ENCODE measurements at regions of chr2 and their contacts with region 1.

Region 1: DNA sequence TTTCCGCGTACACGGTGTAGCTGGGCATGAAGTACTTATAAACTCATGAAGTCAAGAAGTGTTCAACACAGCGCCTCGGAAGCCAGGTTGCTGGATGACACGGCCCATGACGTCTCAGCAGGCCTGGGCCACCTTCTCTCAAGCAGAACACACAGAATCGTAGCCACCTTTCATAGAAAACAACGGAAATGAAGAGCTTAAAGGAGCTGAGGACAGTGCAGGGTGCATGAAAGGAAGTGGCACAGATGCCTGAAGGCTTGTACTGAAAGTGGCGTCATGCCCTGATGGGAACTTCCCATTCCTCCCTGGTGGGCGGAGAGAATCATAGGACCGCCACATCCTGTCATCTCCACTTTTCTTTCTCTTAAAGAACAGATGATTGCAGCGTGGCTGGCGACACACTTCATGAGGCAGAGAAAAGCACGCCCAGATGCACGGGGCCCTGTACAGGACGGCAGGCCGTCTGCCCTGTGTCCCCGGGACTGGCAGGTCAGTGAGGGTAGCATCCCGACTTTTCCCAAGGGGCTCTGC is 31.1 kb downstream of the HDAC4 start:
- DNase-seq: peak; percentile 57 to 95 (median 72)
- ATAC-seq: peak; percentile 94
- H3K4me3 ChIP-seq: peak overlapping the region; percentile 43
- H3K4me3 Mint-ChIP-seq: peak overlapping the region; percentile 75
- H3K27ac ChIP-seq: peak overlapping the region; percentile 80 to 95
- H3K27ac Mint-ChIP-seq: no peak overlapping the region
- H3K4me1 ChIP-seq: peaks cover 44% of the 10 kb centered on the region
- H3K4me1 Mint-ChIP-seq: peaks cover 19% of the 10 kb centered on the region
- H3K27me3 ChIP-seq: no peaks in the 10 kb centered on the region
- H3K27me3 Mint-ChIP-seq: no peaks in the 10 kb centered on the region
- CTCF ChIP-seq: no peak

Region 2: GRCh38 chr2:239275044-239275685 is 94.5 kb before region 1 on chr2:
- CTCF ChIA-PET with region 1: interaction called, 12 read pairs
- POLR2A ChIA-PET with region 1: interaction called, 12 read pairs
- intact Hi-C with region 1: no loop called
- DNase-seq: peak; percentile 70 to 95 (median 80)
- ATAC-seq: peak; percentile 88
- H3K4me3 ChIP-seq: peak overlapping the region; percentile 47
- H3K4me3 Mint-ChIP-seq: peak overlapping the region; percentile 79
- H3K27ac ChIP-seq: peak overlapping the region; percentile 19 to 55
- H3K27ac Mint-ChIP-seq: peak overlapping the region; percentile 93
- H3K4me1 ChIP-seq: peaks cover 46% of the 10 kb centered on the region
- H3K4me1 Mint-ChIP-seq: peaks cover 64% of the 10 kb centered on the region
- H3K27me3 ChIP-seq: no peaks in the 10 kb centered on the region
- H3K27me3 Mint-ChIP-seq: no peaks in the 10 kb centered on the region
- CTCF ChIP-seq: no peak

Region 3: GRCh38 chr2:239288951-239289511 is 80.7 kb before region 1 on chr2:
- CTCF ChIA-PET with region 1: no interaction called
- POLR2A ChIA-PET with region 1: no interaction called
- intact Hi-C with region 1: loop called (anchors 2 to 5 kb)
- DNase-seq: peak in 6 of 14 experiments; percentile 19 to 74 (median 55)
- ATAC-seq: peak; percentile 68
- H3K4me3 ChIP-seq: peak overlapping the region; percentile 39
- H3K4me3 Mint-ChIP-seq: peak overlapping the region; percentile 82
- H3K27ac ChIP-seq: peak overlapping the region; percentile 73 to 81
- H3K27ac Mint-ChIP-seq: peak overlapping the region; percentile 95
- H3K4me1 ChIP-seq: peaks cover 63% of the 10 kb centered on the region
- H3K4me1 Mint-ChIP-seq: peaks cover 75% of the 10 kb centered on the region
- H3K27me3 ChIP-seq: no peaks in the 10 kb centered on the region
- H3K27me3 Mint-ChIP-seq: no peaks in the 10 kb centered on the region
- CTCF ChIP-seq: no peak

Region 4: GRCh38 chr2:239298116-239298804 is 71.4 kb before region 1 on chr2:
- CTCF ChIA-PET with region 1: interaction called, 4 read pairs
- POLR2A ChIA-PET with region 1: interaction called, 10 read pairs
- intact Hi-C with region 1: loop called in 1 of 2 experiments (anchors 1 kb)
- DNase-seq: peak in 13 of 14 experiments; percentile 61 to 90 (median 75)
- ATAC-seq: peak; percentile 86
- H3K4me3 ChIP-seq: peak overlapping the region; percentile 58
- H3K4me3 Mint-ChIP-seq: peak overlapping the region; percentile 93
- H3K27ac ChIP-seq: peak overlapping the region; percentile 55 to 66
- H3K27ac Mint-ChIP-seq: peak overlapping the region; percentile 93
- H3K4me1 ChIP-seq: peaks cover 78% of the 10 kb centered on the region
- H3K4me1 Mint-ChIP-seq: peaks cover 82% of the 10 kb centered on the region
- H3K27me3 ChIP-seq: no peaks in the 10 kb centered on the region
- H3K27me3 Mint-ChIP-seq: no peaks in the 10 kb centered on the region
- CTCF ChIP-seq: peak; percentile 17

Region 5: GRCh38 chr2:239318790-239319661 is 50.7 kb before region 1 on chr2:
- CTCF ChIA-PET with region 1: no interaction called
- POLR2A ChIA-PET with region 1: interaction called, 32 read pairs
- intact Hi-C with region 1: loop called in 1 of 2 experiments (anchors 1 kb)
- DNase-seq: peak in 5 of 14 experiments; percentile 32 to 61 (median 57)
- ATAC-seq: no peak
- H3K4me3 ChIP-seq: peak overlapping the region; percentile 49
- H3K4me3 Mint-ChIP-seq: peak overlapping the region; percentile 90
- H3K27ac ChIP-seq: peak overlapping the region; percentile 37 to 61
- H3K27ac Mint-ChIP-seq: peak overlapping the region; percentile 97
- H3K4me1 ChIP-seq: peaks cover 69% of the 10 kb centered on the region
- H3K4me1 Mint-ChIP-seq: peaks cover 70% of the 10 kb centered on the region
- H3K27me3 ChIP-seq: no peaks in the 10 kb centered on the region
- H3K27me3 Mint-ChIP-seq: no peaks in the 10 kb centered on the region
- CTCF ChIP-seq: no peak

Region 6: GRCh38 chr2:239326831-239327535 is 42.7 kb before region 1 on chr2:
- CTCF ChIA-PET with region 1: no interaction called
- POLR2A ChIA-PET with region 1: interaction called, 32 read pairs
- intact Hi-C with region 1: loop called (anchors 2 kb)
- DNase-seq: peak; percentile 46 to 89 (median 74)
- ATAC-seq: peak; percentile 77
- H3K4me3 ChIP-seq: no peak overlapping the region
- H3K4me3 Mint-ChIP-seq: peak overlapping the region; percentile 75
- H3K27ac ChIP-seq: peak overlapping the region; percentile 71 to 73
- H3K27ac Mint-ChIP-seq: peak overlapping the region; percentile 93
- H3K4me1 ChIP-seq: peaks cover 78% of the 10 kb centered on the region
- H3K4me1 Mint-ChIP-seq: peaks cover 85% of the 10 kb centered on the region
- H3K27me3 ChIP-seq: no peaks in the 10 kb centered on the region
- H3K27me3 Mint-ChIP-seq: no peaks in the 10 kb centered on the region
- CTCF ChIP-seq: no peak

Region 7: DNA sequence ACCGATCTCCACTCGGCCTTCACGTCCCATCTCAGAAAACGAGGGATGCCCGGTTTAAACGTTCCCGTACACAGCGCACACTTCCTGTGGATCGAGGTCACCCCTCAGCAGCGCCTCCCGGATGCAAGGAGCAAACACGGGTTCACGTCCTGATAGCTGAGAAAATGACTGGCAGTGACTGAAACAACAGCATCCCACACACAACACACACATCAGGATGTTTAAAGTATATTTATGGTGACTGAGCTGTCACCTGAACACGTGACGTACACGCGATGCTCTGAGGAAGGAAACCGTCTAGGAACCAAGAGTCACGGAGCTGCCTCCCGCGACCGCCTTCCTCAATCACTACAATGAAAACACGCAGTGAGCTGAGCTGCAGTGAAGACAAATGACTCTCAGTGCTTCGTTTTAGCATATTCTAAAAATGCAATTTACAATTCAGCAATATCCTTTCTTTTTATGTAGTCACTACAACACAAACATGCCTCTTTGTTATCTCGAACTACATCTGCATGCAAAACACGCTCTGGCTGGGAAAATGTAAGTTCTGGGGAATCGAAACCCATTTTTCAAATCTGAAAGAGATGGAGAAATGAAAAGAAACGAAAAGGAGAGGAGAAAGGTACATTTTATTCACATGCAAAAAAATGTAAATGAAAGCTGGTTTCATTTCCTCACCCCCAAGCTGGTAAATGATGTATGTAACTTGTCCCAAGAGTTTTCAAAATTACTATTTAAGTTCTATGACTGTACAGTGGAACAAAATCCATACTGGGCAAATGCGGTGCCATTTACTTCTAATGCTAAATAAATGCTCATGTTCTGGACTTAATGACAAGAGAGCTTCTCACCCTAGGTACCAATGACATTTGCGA is 11.4 kb after region 1 on chr2:
- CTCF ChIA-PET with region 1: interaction called, 12 read pairs
- POLR2A ChIA-PET with region 1: interaction called, 40 read pairs
- intact Hi-C with region 1: loop called in 1 of 2 experiments (anchors 1 kb)
- DNase-seq: peak; percentile 56 to 89 (median 70)
- ATAC-seq: peak; percentile 93
- H3K4me3 ChIP-seq: peak overlapping the region; percentile 51
- H3K4me3 Mint-ChIP-seq: peak overlapping the region; percentile 86
- H3K27ac ChIP-seq: peak overlapping the region; percentile 61 to 65
- H3K27ac Mint-ChIP-seq: peak overlapping the region; percentile 92
- H3K4me1 ChIP-seq: peaks cover 17% of the 10 kb centered on the region
- H3K4me1 Mint-ChIP-seq: peaks cover 23% of the 10 kb centered on the region
- H3K27me3 ChIP-seq: no peaks in the 10 kb centered on the region
- H3K27me3 Mint-ChIP-seq: no peaks in the 10 kb centered on the region
- CTCF ChIP-seq: no peak

Region 8: GRCh38 chr2:239440511-239440959 is 70.8 kb after region 1 on chr2:
- CTCF ChIA-PET with region 1: no interaction called
- POLR2A ChIA-PET with region 1: no interaction called
- intact Hi-C with region 1: no loop called
- DNase-seq: no peak
- ATAC-seq: no peak
- H3K4me3 ChIP-seq: no peak overlapping the region
- H3K4me3 Mint-ChIP-seq: no peak overlapping the region
- H3K27ac ChIP-seq: no peak overlapping the region
- H3K27ac Mint-ChIP-seq: no peak overlapping the region
- H3K4me1 ChIP-seq: peaks cover 16% of the 10 kb centered on the region
- H3K4me1 Mint-ChIP-seq: peaks cover 19% of the 10 kb centered on the region
- H3K27me3 ChIP-seq: peaks cover 15 to 19% of the 10 kb centered on the region in 2 experiments
- H3K27me3 Mint-ChIP-seq: peaks cover 43% of the 10 kb centered on the region
- CTCF ChIP-seq: no peak